Activated naive CD4-positive, alpha-beta T cell treated with anti-CD3 and anti-CD28 coated beads for 36 hours (primary cell): ENCODE measurements at regions of chr6 and their contacts with region 1.

Region 1: GRCh38 chr6:10747251-10747972 is at the start of gene TMEM14B:
- DNase-seq: peak; percentile 100
- H3K4me3 Mint-ChIP-seq: peak within 1 kb of the TSS; percentile 91
- H3K27ac Mint-ChIP-seq: peak within 1 kb of the TSS; percentile 92
- H3K4me1 Mint-ChIP-seq: peaks cover 48% of the 10 kb centered on the region
- H3K27me3 Mint-ChIP-seq: no peaks in the 10 kb centered on the region
- total RNA-seq, gene TMEM14B: 78.7 to 79.5 TPM

Region 2: GRCh38 chr6:9933674-9934073 is 813.7 kb before region 1 on chr6:
- CTCF ChIA-PET with region 1: no interaction called
- intact Hi-C with region 1: no loop called
- DNase-seq: no peak
- H3K4me3 Mint-ChIP-seq: no peak overlapping the region
- H3K27ac Mint-ChIP-seq: no peak overlapping the region
- H3K4me1 Mint-ChIP-seq: no peaks in the 10 kb centered on the region
- H3K27me3 Mint-ChIP-seq: no peaks in the 10 kb centered on the region

Region 3: GRCh38 chr6:10404107-10404798 is 343.2 kb before region 1 on chr6:
- CTCF ChIA-PET with region 1: no interaction called
- intact Hi-C with region 1: loop called (anchors 1 kb)
- DNase-seq: peak; percentile 95
- H3K4me3 Mint-ChIP-seq: peak overlapping the region; percentile 84
- H3K27ac Mint-ChIP-seq: peak overlapping the region; percentile 59
- H3K4me1 Mint-ChIP-seq: peaks cover 7% of the 10 kb centered on the region
- H3K27me3 Mint-ChIP-seq: peaks cover 63% of the 10 kb centered on the region

Region 4: DNA sequence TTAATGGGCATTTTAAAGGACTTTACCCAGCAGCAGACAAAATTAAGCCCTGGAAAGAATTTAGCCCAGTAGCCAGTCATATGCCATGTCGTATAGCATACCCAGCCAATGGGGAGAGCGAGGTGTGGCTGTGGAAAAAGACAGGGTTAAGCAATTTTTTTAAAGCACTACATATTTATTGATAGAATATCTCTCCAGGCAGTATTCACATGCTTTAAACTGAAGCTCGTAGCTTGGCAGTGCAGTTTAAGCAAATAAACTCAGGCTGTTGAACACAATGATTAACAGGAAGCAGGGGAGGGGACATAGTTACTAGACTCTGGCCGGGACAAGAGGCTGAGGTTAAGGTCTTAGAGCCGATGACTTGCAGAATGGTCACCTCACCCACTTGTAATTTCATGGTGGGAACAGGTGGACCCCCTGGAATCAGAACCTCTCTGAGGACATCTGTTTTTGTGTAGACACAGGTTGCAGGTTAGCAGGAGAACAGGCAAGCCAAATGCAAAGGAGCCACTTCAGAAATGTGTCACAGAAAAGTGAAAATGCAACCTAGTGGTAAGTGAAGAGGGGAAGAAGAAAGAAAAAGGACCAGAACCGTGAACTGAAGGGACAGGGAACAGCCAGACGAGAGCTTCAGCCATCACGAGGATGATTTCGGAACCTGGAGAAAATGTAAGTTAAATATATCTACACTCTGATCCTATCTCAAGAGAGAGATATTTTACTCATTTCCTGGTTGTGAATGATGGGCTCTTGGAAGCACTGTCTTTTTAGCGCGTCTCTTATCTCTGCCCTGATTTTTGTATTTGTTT is 219.0 kb before region 1 on chr6:
- CTCF ChIA-PET with region 1: no interaction called
- intact Hi-C with region 1: loop called (anchors 1 kb)
- DNase-seq: peak; percentile 38
- H3K4me3 Mint-ChIP-seq: peak overlapping the region; percentile 80
- H3K27ac Mint-ChIP-seq: peak overlapping the region; percentile 71
- H3K4me1 Mint-ChIP-seq: peaks cover 48% of the 10 kb centered on the region
- H3K27me3 Mint-ChIP-seq: no peaks in the 10 kb centered on the region

Region 5: DNA sequence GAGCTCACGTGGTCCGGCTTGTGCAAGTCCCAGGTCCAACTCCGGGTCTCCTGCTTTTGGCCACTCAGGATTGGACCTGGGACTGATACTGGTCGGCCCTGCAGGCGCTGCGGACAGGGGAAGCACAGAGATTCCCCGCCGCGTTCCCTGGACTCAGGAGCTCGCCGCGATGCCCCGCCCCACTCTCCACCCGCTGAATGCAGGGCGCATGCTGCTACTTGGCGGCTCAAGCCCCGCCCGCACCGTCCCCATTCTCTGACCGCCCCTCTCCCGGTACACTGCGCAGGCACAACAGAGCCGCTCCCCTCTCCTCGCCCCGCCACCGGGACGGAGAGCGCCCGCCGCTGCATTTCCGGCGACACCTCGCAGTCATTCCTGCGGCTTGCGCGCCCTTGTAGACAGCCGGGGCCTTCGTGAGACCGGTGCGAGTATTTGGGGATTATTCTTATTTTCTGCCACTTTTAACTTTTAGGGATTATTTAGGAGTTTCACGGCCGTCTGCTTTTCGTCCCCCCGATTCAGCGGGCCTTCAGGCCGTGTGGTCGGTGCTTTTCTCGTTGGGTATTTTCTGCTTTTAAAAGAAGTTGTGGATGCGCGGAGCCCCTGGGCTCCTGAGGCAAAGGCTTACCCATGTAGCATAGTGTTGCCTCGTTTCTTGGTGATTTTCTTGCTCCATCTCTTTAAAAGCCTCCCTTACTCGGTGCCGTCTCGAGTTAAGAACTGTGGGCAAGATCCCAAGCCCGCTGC is 24.4 kb before region 1 on chr6 and contains the start of gene TMEM14C:
- CTCF ChIA-PET with region 1: interaction called, 4 read pairs
- intact Hi-C with region 1: loop called (anchors 1 kb)
- DNase-seq: peak; percentile 94
- H3K4me3 Mint-ChIP-seq: peak within 1 kb of the TSS; percentile 89
- H3K27ac Mint-ChIP-seq: peak within 1 kb of the TSS; percentile 91
- H3K4me1 Mint-ChIP-seq: peaks cover 44% of the 10 kb centered on the region
- H3K27me3 Mint-ChIP-seq: no peaks in the 10 kb centered on the region
- total RNA-seq, gene TMEM14C: 77.0 to 81.1 TPM

Region 6: GRCh38 chr6:10837995-10838793 is 90.8 kb after region 1 on chr6 and contains the start of gene MAK:
- CTCF ChIA-PET with region 1: no interaction called
- intact Hi-C with region 1: loop called (anchors 1 kb)
- DNase-seq: peak; percentile 86
- H3K4me3 Mint-ChIP-seq: peak within 1 kb of the TSS; percentile 74
- H3K27ac Mint-ChIP-seq: peak within 1 kb of the TSS; percentile 85
- H3K4me1 Mint-ChIP-seq: peaks cover 17% of the 10 kb centered on the region
- H3K27me3 Mint-ChIP-seq: peaks cover 50% of the 10 kb centered on the region
- total RNA-seq, gene MAK: 0.12 to 0.14 TPM